Calu3 (cell line): ENCODE measurements at regions of chr6 and their contacts with region 1.

Region 1: DNA sequence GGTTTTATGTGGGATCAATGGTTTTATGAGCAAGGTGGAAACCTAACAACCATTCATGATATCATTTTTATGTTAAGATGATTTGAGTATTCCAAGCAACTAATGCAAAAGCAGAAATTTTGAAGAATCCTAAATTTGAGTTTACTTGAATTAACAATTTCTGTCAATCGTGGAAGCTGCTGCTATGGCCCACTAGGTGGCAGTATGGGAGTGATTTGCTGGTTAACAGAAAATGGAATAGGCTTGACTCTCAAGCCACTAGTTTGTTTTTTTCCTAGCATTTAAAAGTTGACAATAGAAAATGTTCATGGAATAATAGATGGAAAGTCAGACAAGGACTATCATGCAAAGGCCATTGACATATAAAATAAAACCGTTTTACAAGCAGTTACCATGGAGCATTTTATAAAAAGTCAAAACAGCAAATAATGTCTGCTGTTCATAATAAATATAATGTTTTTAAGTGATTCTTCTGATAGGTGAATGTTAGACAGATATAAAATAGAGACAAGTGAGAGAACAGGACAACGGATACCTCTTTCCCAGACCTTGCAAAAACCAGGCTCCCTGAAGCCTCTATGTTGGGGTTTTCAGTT is 43.0 kb upstream of the TMEM200A start:
- DNase-seq: peak; percentile 30
- H3K4me3 Mint-ChIP-seq: no peak overlapping the region
- H3K27ac Mint-ChIP-seq: no peak overlapping the region
- H3K4me1 Mint-ChIP-seq: no peaks in the 10 kb centered on the region
- H3K27me3 Mint-ChIP-seq: peaks cover 25% of the 10 kb centered on the region
- CTCF ChIP-seq: peak; percentile 77

Region 2: GRCh38 chr6:130282234-130282995 is 40.4 kb before region 1 on chr6:
- CTCF ChIA-PET with region 1: no interaction called
- intact Hi-C with region 1: no loop called
- DNase-seq: no peak
- H3K4me3 Mint-ChIP-seq: no peak overlapping the region
- H3K27ac Mint-ChIP-seq: no peak overlapping the region
- H3K4me1 Mint-ChIP-seq: no peaks in the 10 kb centered on the region
- H3K27me3 Mint-ChIP-seq: peaks cover 12% of the 10 kb centered on the region
- CTCF ChIP-seq: no peak

Region 3: DNA sequence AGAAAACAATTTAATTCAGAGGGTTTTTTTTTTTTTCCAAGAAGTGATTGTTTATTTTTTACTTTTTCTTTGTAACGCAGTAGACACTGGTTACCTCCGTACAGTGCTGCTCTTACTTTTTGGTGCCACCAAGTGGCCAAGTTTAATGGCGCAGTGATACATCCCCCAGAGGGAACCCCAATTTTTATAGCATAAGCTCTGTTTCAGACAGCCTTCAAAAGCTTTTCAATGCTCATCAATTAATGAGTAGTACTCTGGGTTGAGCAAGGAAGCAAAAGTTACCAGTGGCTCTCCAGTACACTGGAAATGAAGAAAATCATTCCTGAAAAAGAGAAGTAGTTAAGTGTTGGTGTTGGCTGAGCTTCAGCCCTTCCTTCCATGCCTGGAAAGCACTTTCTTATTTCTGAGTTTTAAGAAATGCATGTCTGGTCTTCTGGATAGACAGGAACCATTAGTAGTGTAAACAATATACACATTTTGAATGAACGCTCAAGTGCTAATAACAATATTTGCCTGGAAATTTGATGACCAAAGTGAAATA is 375.3 kb after region 1 on chr6:
- CTCF ChIA-PET with region 1: interaction called, 14 read pairs
- intact Hi-C with region 1: loop called (anchors 1 kb)
- DNase-seq: peak; percentile 46
- H3K4me3 Mint-ChIP-seq: no peak overlapping the region
- H3K27ac Mint-ChIP-seq: no peak overlapping the region
- H3K4me1 Mint-ChIP-seq: no peaks in the 10 kb centered on the region
- H3K27me3 Mint-ChIP-seq: peaks cover 47% of the 10 kb centered on the region
- CTCF ChIP-seq: peak; percentile 63

Region 4: GRCh38 chr6:130760006-130760405 is 437.2 kb after region 1 on chr6:
- CTCF ChIA-PET with region 1: no interaction called
- intact Hi-C with region 1: loop called (anchors 1 kb)
- DNase-seq: peak; percentile 24
- H3K4me3 Mint-ChIP-seq: no peak overlapping the region
- H3K27ac Mint-ChIP-seq: no peak overlapping the region
- H3K4me1 Mint-ChIP-seq: no peaks in the 10 kb centered on the region
- H3K27me3 Mint-ChIP-seq: peaks cover 27% of the 10 kb centered on the region
- CTCF ChIP-seq: peak; percentile 61

Region 5: DNA sequence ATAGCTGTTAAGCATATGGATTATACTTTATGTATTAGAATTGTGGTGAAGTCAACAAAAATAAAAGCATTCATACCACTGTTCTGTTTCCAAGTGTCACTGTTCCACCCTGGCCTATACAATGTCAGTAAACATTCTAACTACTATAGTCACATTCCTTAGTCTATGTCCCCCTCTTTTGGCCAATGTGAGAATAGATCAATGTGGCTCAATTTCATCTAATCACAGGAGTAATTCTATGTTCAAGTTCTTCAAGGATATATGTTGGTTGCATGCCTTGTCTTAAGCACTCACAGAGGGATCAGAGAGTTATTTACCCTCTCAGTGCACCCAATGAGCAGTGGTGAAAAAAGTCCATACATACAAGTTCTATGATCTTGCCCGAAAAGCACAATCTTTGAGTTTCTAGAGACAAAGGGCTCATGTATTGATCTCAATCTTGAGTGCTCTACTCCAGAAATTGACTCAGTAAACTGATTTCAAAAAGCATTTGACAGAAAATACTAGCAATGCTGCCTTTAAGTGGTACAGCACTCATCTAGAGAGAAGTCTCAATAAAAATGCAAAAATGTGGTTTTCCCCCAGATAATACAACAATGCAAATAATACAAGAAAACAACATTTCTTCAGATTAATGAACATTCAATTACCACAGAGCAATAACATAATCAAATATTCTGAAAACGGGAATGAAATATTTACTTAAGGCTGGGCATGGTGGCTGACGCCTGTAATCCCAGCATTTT is 521.0 kb after region 1 on chr6:
- CTCF ChIA-PET with region 1: no interaction called
- intact Hi-C with region 1: loop called (anchors 1 kb)
- DNase-seq: no peak
- H3K4me3 Mint-ChIP-seq: no peak overlapping the region
- H3K27ac Mint-ChIP-seq: no peak overlapping the region
- H3K4me1 Mint-ChIP-seq: peaks cover 7% of the 10 kb centered on the region
- H3K27me3 Mint-ChIP-seq: no peaks in the 10 kb centered on the region
- CTCF ChIP-seq: peak; percentile 34

Region 6: DNA sequence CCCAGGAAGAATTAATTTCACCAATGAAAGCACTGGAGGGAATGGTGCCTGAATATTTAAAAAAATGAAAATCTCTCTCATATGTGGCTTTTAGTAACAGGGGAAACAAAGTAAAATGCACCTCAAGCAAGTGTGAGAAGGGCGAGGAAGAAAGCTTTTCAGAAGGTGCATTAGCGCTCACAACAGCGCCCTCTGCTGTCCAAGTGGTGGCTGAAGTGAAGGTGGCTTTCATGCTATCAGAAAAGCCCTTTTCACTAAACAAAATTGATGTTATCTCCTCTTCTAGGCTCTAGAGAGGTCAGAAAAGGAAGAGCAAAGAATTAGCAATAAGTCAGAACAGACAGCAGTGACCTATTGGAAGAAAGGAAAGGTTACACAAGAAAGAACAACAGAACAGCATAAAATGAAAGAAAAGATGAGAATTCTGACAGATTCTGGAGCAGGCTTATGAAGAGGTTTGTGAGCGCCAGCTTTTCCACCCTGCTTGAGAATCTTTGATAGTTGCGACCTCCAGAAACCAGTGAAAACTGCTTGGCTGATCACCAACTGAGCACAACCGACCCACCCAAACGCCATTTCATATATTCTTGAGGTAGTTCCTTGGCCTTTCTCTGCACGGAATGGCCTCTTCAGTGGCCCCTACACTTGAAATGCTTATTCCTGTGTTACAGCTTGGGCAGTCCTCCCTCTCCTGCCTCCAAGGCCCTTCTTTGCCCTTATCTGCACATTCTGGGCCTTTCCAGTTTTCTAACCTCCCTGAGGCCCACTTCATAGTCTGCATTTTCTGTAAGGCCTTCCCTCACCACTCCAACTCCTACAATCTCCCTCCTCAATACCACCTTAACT is 549.7 kb after region 1 on chr6:
- CTCF ChIA-PET with region 1: no interaction called
- intact Hi-C with region 1: loop called (anchors 10 kb)
- DNase-seq: peak; percentile 78
- H3K4me3 Mint-ChIP-seq: no peak overlapping the region
- H3K27ac Mint-ChIP-seq: no peak overlapping the region
- H3K4me1 Mint-ChIP-seq: no peaks in the 10 kb centered on the region
- H3K27me3 Mint-ChIP-seq: no peaks in the 10 kb centered on the region
- CTCF ChIP-seq: peak; percentile 89